K562 (cell line): ENCODE measurements at regions of chr14 and their contacts with region 1.

Region 1: GRCh38 chr14:102591889-102592763 is at the start of gene RCOR1:
- DNase-seq: peak; percentile 88 to 96 (median 93)
- ATAC-seq: peak; percentile 84
- H3K4me3 ChIP-seq: peak within 1 kb of the TSS; percentile 93
- H3K27ac ChIP-seq: peak within 1 kb of the TSS; percentile 98
- H3K4me1 ChIP-seq: peaks cover 13 to 33% of the 10 kb centered on the region in 2 experiments; a peak in 4 of 5 replicates
- H3K27me3 ChIP-seq: no peaks in the 10 kb centered on the region
- CTCF ChIP-seq: no peak
- EP300 ChIP-seq: no peak; the same call in 1 of the 2 replicates
- POLR2A ChIP-seq: peak; percentile 68
- RAD21 ChIP-seq: no peak; a peak in 1 of 4 replicates
- polyA plus RNA-seq, gene RCOR1: 8.5 to 10.9 TPM

Region 2: GRCh38 chr14:102437997-102438915 is 153.9 kb before region 1 on chr14:
- CTCF ChIA-PET with region 1: no interaction called
- POLR2A ChIA-PET with region 1: no interaction called
- in situ Hi-C with region 1: no loop called
- intact Hi-C with region 1: loop called (anchors 5 kb)
- DNase-seq: peak; percentile 85 to 90 (median 86)
- ATAC-seq: peak; percentile 97
- H3K4me3 ChIP-seq: no peak overlapping the region
- H3K27ac ChIP-seq: no peak overlapping the region
- H3K4me1 ChIP-seq: peaks cover 7 to 8% of the 10 kb centered on the region in 2 experiments; a peak in 4 of 5 replicates
- H3K27me3 ChIP-seq: peaks cover 0 to 4% of the 10 kb centered on the region in 2 experiments; a peak in 1 of 5 replicates
- CTCF ChIP-seq: peak; percentile 77 to 78 (median 78)
- EP300 ChIP-seq: no peak
- POLR2A ChIP-seq: no peak
- RAD21 ChIP-seq: peak; percentile 90 to 93

Region 3: DNA sequence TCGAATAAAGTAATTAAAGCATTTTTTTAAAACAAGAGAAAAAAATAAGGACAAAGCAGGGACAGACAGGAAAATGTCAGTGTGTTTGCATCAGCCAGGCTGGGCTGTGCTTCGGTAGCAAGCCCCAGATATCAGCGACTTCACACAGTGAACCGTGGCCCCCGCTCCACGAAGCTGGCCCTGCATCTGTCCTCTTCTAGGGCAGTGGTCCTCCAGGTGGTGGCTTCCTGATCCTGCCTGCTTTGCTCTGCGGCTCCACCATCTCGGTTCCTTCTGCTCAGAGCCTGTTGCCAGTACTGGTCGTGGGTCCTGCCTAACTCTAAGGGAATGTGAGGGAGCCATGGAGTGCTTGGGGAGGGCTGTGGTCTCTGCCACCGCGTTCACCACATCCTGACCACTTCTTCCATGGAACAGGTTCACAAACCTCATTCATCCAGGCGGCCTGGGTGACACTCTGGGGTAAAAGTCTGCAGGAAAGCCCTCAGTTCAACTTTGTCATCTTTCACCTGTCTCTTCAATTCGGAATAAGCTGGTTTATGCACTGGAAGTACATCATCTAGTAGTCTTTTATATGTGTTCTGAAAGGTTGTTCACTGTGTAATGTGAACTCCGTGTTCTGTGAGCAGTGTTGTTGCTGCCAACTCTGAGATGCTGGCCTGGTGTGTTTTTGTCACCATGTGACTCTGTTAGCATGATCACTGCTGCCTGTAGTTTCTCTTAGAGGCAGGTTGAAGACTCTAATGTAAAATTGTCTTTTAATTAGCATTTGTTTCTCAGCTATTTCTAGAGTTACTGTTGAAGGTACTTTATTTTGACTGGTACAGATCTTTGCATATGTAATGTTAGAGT is 130.4 kb before region 1 on chr14:
- CTCF ChIA-PET with region 1: no interaction called
- POLR2A ChIA-PET with region 1: no interaction called
- in situ Hi-C with region 1: no loop called
- intact Hi-C with region 1: no loop called
- DNase-seq: peak in 1 of 4 experiments; percentile 24
- ATAC-seq: peak; percentile 92
- H3K4me3 ChIP-seq: no peak overlapping the region
- H3K27ac ChIP-seq: peak overlapping the region; percentile 21; the same call in 1 of the 3 replicates
- H3K4me1 ChIP-seq: peaks cover 0 to 6% of the 10 kb centered on the region in 2 experiments; a peak in 4 of 5 replicates
- H3K27me3 ChIP-seq: no peaks in the 10 kb centered on the region
- CTCF ChIP-seq: no peak
- EP300 ChIP-seq: peak; percentile 48; the same call in 1 of the 2 replicates
- POLR2A ChIP-seq: no peak
- RAD21 ChIP-seq: no peak

Region 4: GRCh38 chr14:102524466-102525218 is 67.5 kb before region 1 on chr14:
- CTCF ChIA-PET with region 1: interaction called, 3 read pairs
- POLR2A ChIA-PET with region 1: interaction called, 8 read pairs
- in situ Hi-C with region 1: no loop called
- intact Hi-C with region 1: loop called (anchors 2 kb)
- DNase-seq: peak; percentile 95 to 97 (median 96)
- ATAC-seq: peak; percentile 98
- H3K4me3 ChIP-seq: peak overlapping the region; percentile 45
- H3K27ac ChIP-seq: peak overlapping the region; percentile 88
- H3K4me1 ChIP-seq: peaks cover 12 to 37% of the 10 kb centered on the region in 2 experiments; a peak in 4 of 5 replicates
- H3K27me3 ChIP-seq: no peaks in the 10 kb centered on the region
- CTCF ChIP-seq: peak; percentile 89 to 97 (median 92)
- EP300 ChIP-seq: no peak
- POLR2A ChIP-seq: peak; percentile 84
- RAD21 ChIP-seq: peak; percentile 89 to 91

Region 5: DNA sequence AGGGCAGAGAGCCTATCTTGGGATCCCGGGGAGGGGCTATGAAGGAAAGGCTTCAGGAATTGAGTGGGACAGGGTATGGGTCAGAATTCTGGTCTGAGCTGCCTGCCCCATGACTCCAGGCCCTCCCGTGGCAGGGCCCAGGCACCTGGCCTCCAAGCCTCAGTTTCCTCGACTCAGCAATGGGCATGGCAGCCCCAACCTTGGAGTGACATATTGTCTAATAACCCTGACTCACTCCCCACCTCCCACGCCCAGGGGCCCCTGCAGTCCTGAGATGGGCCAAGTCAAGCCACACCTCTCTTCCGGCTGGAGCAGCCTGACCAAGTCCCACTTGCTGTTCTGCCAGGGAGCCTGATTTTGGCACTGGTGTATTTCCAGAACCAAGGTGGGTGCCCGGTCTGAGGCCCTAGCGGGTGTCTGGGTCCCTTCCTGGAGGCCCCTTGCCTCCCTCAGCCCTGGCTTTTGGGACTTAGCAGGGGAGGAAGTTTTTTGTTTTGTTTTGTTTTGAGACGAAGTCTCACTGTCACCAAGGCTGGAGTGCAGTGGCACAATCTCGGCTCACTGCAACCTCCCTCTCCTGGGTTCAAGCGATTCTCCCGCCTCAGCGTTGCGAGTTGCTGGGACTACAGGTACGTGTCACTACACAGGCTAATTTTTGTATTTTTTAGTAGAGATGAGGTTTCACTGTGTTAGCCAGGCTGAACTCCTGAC is 40.0 kb before region 1 on chr14:
- CTCF ChIA-PET with region 1: no interaction called
- POLR2A ChIA-PET with region 1: interaction called, 4 read pairs
- in situ Hi-C with region 1: no loop called
- intact Hi-C with region 1: loop called (anchors 1 kb)
- DNase-seq: peak; percentile 77 to 93 (median 84)
- ATAC-seq: peak; percentile 93
- H3K4me3 ChIP-seq: peak overlapping the region; percentile 49
- H3K27ac ChIP-seq: peak overlapping the region; percentile 83
- H3K4me1 ChIP-seq: peaks cover 23 to 24% of the 10 kb centered on the region in 2 experiments
- H3K27me3 ChIP-seq: no peaks in the 10 kb centered on the region
- CTCF ChIP-seq: no peak
- EP300 ChIP-seq: peak; percentile 85
- POLR2A ChIP-seq: peak; percentile 93
- RAD21 ChIP-seq: no peak

Region 6: GRCh38 chr14:102605025-102605424 is 12.9 kb after region 1 on chr14:
- CTCF ChIA-PET with region 1: no interaction called
- POLR2A ChIA-PET with region 1: interaction called, 10 read pairs
- in situ Hi-C with region 1: no loop called
- intact Hi-C with region 1: no loop called
- DNase-seq: no peak
- ATAC-seq: no peak
- H3K4me3 ChIP-seq: no peak overlapping the region
- H3K27ac ChIP-seq: no peak overlapping the region
- H3K4me1 ChIP-seq: peaks cover 4 to 5% of the 10 kb centered on the region in 2 experiments; a peak in 3 of 5 replicates
- H3K27me3 ChIP-seq: no peaks in the 10 kb centered on the region
- CTCF ChIP-seq: no peak
- EP300 ChIP-seq: no peak
- POLR2A ChIP-seq: no peak
- RAD21 ChIP-seq: no peak

Region 7: DNA sequence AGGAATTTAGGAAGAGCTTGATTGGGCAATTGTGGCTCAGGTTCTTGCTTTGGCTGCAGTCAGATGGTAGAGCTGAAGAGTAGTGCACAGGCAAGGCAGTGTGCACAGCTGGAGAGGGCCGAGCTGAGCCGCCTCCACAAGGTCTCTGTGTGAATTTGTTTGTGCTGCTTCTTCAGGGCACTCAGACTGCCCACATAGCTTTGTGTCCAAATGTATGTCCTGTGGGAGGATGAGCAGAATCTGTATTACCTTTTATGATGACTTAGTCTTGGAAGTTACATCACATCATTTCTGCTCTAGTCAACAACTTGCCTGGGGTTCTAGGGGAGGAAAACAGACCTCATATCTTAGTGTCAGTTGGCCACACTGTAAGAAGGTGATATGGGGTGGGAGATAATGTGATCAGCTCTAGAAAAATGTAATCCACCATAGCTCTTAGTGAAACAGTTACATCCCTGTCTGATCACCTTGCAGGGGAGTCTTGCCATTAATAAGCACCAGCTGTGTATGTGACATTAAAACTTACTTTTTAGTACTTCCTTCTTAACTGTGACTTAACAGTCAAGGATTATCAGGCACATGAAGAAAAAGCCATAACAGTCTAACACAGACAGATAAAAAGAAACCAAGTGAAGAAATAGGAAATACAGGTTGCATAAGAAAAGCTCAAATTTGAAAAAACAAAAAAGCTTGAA is 53.8 kb after region 1 on chr14:
- CTCF ChIA-PET with region 1: no interaction called
- POLR2A ChIA-PET with region 1: no interaction called
- in situ Hi-C with region 1: no loop called
- intact Hi-C with region 1: loop called (anchors 1 kb)
- DNase-seq: peak in 2 of 4 experiments; percentile 65 to 74
- ATAC-seq: peak; percentile 85
- H3K4me3 ChIP-seq: no peak overlapping the region; the same call in 1 of the 2 replicates
- H3K27ac ChIP-seq: peak overlapping the region; percentile 71
- H3K4me1 ChIP-seq: peaks cover 19 to 50% of the 10 kb centered on the region in 2 experiments
- H3K27me3 ChIP-seq: no peaks in the 10 kb centered on the region
- CTCF ChIP-seq: no peak
- EP300 ChIP-seq: peak; percentile 88
- POLR2A ChIP-seq: no peak
- RAD21 ChIP-seq: no peak

Region 8: GRCh38 chr14:102688290-102688689 is 96.2 kb after region 1 on chr14:
- CTCF ChIA-PET with region 1: no interaction called
- POLR2A ChIA-PET with region 1: interaction called, 5 read pairs
- in situ Hi-C with region 1: no loop called
- intact Hi-C with region 1: loop called (anchors 5 kb)
- DNase-seq: no peak
- ATAC-seq: no peak
- H3K4me3 ChIP-seq: no peak overlapping the region
- H3K27ac ChIP-seq: no peak overlapping the region
- H3K4me1 ChIP-seq: peaks cover 14 to 33% of the 10 kb centered on the region in 2 experiments; a peak in 4 of 5 replicates
- H3K27me3 ChIP-seq: no peaks in the 10 kb centered on the region
- CTCF ChIP-seq: no peak
- EP300 ChIP-seq: no peak
- POLR2A ChIP-seq: no peak
- RAD21 ChIP-seq: no peak